ENCODE measurements at regions of chr6 and their contacts with region 1.

Region 1: DNA sequence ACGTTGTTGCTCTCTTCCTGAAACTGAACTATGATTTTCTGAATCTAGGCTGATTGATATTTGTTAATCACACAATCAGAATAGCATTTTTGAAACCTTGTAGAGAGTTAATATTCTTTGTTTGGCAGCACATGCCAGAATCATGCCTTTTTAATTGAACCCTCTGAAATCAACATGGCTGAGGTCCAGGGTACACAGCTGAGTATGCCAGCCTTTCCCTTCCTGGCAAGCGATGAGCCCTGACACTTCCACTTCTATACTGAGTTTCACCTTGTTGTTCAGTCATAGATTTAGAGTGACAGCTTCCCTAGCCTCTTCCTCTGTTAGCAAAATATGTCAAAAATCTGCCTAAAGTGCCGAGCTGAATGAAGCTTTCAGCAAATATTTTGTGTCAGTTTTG is 6.8 kb downstream of the HDDC2 start:
- DNase-seq: peak in 2 of 5 donors; percentile 37 to 53
- ATAC-seq: peak; percentile 82 to 89 (median 86)
- H3K4me3 ChIP-seq: no peak overlapping the region
- H3K27ac ChIP-seq: peak overlapping the region in 10 of 12 donors; percentile 40 to 71 (median 60)
- H3K4me1 ChIP-seq: peaks cover 0 to 53% (median 27%) of the 10 kb centered on the region in 12 donors
- H3K27me3 ChIP-seq: no peaks in the 10 kb centered on the region
- CTCF ChIP-seq: no peak
- POLR2A ChIP-seq: no peak

Region 2: DNA sequence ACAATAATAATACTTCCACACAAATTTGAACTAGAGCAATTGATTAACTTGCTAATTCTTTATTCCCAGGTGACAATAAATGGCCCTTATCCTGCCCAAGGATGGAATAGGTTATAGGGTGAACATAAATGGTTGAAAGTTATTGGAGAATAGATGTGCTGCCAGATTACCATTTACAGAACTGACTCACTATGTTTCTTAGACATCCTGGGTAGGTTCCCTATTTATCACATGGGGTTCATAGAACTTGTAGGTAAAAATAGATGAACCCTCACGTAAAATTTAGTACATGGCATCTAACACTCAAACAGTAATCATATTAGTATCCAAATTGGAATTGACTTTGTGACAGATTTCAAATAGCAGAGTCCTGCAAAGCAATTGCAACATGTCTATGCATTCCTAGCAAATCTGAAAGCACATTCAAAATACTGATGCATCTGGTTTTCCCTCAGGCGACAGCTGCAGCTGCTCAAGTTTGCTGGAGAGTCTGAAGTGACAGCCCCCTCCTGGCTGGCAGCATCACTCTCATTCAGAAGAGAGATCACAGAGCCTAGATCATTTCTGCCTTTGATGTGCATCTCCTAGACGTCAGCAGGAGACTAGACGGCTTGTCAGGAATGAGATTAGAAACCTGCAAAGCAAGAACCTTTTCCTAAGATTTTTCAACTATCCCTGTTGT is 412.9 kb before region 1 on chr6:
- intact Hi-C with region 1: loop called in 3 of 10 experiments (anchors 10 kb)
- DNase-seq: no peak
- ATAC-seq: no peak
- H3K4me3 ChIP-seq: no peak overlapping the region
- H3K27ac ChIP-seq: no peak overlapping the region
- H3K4me1 ChIP-seq: peaks cover 0 to 14% (median 10%) of the 10 kb centered on the region in 12 donors
- H3K27me3 ChIP-seq: no peaks in the 10 kb centered on the region
- CTCF ChIP-seq: no peak
- POLR2A ChIP-seq: no peak

Region 3: DNA sequence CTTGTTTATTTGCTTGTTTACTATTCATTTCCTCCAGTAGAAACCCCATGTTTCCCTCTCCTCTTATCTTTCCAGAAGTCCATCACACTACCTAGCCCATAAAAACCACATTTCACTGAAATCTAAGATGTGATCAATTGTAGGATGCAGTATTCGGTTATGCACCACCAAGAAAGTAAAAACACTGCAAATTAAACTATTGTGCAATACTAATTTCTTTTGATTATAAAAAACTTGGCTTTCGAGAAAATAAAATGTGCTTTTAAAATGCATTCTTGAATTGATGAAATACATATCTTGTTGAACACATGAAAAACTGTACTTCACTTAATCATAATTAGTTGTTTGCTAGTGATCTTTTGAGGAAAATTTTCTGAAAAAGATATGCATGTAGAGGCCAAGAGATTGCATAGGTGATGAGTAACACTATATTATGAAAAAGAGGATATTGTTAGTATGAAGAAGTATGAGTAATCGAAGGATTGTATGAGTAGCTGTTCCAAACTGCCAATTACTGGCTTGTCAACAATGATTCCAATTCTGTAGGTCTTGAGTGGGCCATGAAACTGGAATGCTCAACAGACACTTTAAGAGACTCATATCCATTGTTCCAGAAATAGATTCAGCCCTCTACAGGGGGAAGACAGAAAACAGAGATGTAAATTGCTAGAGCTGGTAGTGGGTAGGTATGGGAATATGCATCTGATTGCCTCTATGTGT is 253.0 kb before region 1 on chr6:
- intact Hi-C with region 1: no loop called
- DNase-seq: no peak
- ATAC-seq: peak in 1 of 4 donors; percentile 36
- H3K4me3 ChIP-seq: no peak overlapping the region
- H3K27ac ChIP-seq: peak overlapping the region in 1 of 12 donors; percentile 45
- H3K4me1 ChIP-seq: peaks cover 0 to 15% (median 5%) of the 10 kb centered on the region in 12 donors
- H3K27me3 ChIP-seq: no peaks in the 10 kb centered on the region
- CTCF ChIP-seq: no peak
- POLR2A ChIP-seq: no peak

Region 4: DNA sequence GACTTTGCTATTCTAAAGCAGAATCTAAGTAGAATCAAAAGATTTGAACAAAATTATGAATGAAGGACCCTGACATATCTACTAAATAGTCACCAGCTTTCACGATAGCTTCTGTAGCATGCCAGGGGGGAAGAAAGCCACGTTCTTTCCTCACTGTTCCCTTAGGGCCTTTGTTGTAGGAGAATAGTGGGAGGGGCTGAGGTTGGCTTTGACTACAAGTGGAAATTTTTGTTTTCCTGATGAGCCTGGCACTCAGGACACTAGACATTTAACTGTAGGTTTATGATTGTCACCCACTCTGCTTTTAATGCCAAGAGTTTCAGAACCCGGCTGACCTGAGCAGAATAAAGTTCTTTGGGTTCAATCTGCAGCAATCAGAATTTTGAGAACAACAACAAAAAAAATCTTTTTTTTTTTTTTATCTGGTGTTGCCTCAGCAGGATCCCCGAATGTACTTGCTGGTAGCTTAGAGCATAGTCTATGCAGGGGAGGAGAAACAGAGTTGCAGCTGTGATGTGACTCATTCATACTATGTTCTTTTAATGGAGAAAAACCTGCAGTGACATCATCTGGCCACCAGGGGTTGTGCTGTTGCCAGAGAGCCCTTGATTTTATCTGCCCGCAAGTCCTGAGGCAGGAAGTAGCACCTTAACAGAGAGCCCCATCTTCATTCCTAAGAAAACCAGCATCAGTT is 102.9 kb before region 1 on chr6:
- intact Hi-C with region 1: loop called in 1 of 10 experiments (anchors 5 kb)
- DNase-seq: peak in 4 of 5 donors; percentile 21 to 63 (median 43)
- ATAC-seq: peak; percentile 13 to 80 (median 68)
- H3K4me3 ChIP-seq: no peak overlapping the region
- H3K27ac ChIP-seq: no peak overlapping the region
- H3K4me1 ChIP-seq: peaks cover 2 to 63% (median 37%) of the 10 kb centered on the region in 12 donors
- H3K27me3 ChIP-seq: no peaks in the 10 kb centered on the region
- CTCF ChIP-seq: peak; percentile 52 to 86 (median 67)
- POLR2A ChIP-seq: no peak

Region 5: DNA sequence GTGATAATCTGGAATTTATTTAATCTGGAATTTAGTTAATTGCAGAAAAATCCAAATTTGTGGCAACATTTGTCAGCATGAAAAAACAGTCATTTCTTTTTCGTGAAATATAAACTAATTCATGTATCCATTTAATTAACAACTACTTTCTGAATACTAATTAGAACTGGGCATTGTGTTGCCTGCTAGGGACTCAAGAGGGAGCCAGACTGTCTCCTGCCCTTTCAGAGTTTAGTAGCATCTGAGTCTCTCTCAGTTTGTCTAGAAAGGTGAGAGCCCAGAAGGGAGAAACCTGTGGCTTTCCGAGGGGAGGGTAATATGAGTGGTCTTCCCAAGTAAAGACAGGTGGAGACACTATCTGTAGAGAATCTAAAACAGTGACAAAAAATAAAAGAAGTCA is 217.7 kb after region 1 on chr6:
- intact Hi-C with region 1: no loop called
- DNase-seq: no peak
- ATAC-seq: no peak
- H3K4me3 ChIP-seq: no peak overlapping the region
- H3K27ac ChIP-seq: no peak overlapping the region
- H3K4me1 ChIP-seq: no peaks in the 10 kb centered on the region
- H3K27me3 ChIP-seq: no peaks in the 10 kb centered on the region
- CTCF ChIP-seq: peak in 2 of 12 donors; percentile 8 to 11
- POLR2A ChIP-seq: no peak

Measured in heart left ventricle (tissue), 16 donors.